Sigmoid colon (tissue), 7 donors: ENCODE measurements at regions of chr15 and their contacts with region 1.

Region 1: GRCh38 chr15:32659340-32660155 is 18.0 kb downstream of the SCG5 start:
- DNase-seq: no peak
- H3K4me3 ChIP-seq: no peak overlapping the region
- H3K27ac ChIP-seq: peak overlapping the region in 2 of 4 donors; percentile 2 to 48
- H3K4me1 ChIP-seq: peaks cover 0 to 9% (median 0%) of the 10 kb centered on the region in 4 donors
- H3K27me3 ChIP-seq: no peaks in the 10 kb centered on the region
- CTCF ChIP-seq: no peak
- EP300 ChIP-seq: no peak
- POLR2A ChIP-seq: no peak

Region 2: DNA sequence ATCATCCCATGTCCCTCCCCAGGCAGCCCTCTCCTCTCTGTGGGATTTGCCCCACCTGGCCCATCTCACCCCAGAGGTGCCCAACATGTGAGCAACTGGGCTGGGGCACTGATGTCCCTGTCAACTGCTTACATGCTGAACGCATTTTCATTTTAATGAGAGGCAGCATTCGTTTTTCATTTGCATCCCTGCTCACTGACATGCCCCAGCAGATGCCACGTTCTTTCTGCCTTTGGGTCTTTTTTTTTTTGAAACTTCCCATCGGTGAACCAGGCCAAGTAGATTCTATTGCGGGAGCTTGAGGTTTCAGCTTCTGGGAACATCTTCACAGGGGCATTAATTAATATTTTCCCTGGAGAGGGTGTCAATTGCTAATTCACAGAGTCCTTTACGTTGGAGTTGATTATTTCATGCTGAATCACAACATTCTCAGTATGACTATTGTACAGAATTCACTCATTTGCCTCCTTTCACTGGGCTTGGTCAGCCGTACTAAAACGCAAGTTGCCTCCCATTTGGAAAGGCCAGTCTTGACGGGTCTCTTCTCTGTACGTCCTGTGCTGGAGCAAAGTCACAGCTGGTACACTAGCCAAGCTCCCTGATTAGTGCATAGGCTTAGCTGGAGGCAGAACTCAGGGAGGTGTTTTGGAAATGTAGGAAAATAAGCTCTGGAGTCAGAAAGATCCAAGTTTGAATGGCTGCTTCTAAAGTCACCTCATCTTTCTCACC is 559.4 kb before region 1 on chr15:
- intact Hi-C with region 1: no loop called
- DNase-seq: no peak
- H3K4me3 ChIP-seq: no peak overlapping the region
- H3K27ac ChIP-seq: no peak overlapping the region
- H3K4me1 ChIP-seq: no peaks in the 10 kb centered on the region
- H3K27me3 ChIP-seq: no peaks in the 10 kb centered on the region
- CTCF ChIP-seq: no peak
- EP300 ChIP-seq: no peak
- POLR2A ChIP-seq: no peak

Region 3: DNA sequence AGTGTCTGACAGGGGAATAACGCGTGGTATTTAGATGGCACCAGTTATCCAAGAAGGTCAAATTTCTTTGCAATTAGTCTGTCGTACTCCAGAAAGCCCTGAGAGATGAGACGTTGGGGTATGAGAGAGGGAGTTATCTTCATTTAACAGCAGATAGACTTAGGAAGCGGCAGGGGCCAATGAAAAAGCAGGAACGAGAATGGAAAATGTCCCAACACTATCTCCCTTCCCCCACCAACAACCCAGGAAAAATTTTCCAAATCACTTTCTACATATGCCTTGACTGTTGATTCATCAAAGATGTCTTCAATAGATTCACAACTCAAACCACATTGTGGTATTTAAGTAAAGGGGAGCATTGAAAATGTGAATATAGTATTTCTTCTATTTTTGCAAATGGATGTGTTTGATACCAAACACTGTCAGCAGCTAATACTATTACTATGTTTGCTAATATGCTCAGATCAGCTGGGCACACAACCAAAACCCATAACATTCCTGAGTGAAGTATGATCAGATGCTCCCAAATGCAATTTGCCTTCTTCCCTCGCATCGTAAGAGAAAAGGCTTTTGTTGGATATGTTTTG is 44.9 kb after region 1 on chr15:
- intact Hi-C with region 1: no loop called
- DNase-seq: no peak
- H3K4me3 ChIP-seq: no peak overlapping the region
- H3K27ac ChIP-seq: no peak overlapping the region
- H3K4me1 ChIP-seq: peaks cover 0 to 11% (median 2%) of the 10 kb centered on the region in 4 donors
- H3K27me3 ChIP-seq: no peaks in the 10 kb centered on the region
- CTCF ChIP-seq: no peak
- EP300 ChIP-seq: no peak
- POLR2A ChIP-seq: no peak

Region 4: DNA sequence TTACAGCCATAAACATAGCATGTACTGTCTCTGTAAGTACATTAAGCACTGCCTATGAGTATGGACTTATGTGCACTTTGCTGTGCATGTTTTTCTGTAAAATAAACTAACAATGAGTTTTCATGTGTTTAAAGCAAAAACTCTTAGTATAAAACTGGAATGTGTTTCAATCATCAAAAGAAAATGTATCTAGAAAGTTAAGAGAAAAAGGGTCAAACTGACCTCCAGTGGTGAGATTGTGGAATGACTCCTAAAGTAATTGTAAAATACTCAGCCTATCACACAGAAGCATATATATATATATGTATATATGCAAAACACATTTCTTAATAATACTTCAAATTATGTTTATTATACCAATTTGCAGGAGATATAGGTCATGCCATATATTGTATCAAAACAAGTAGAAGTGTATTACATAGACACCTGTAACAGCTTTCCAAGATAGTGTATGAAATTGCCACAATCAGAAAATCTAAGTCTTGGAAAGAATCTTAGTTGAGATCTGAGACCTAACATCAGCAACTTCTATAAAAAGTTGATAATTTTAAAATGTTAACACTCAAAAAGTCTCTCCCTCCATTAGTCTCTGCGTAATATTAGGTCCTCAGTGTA is 335.4 kb after region 1 on chr15:
- intact Hi-C with region 1: loop called (anchors 2 kb)
- DNase-seq: no peak
- H3K4me3 ChIP-seq: no peak overlapping the region
- H3K27ac ChIP-seq: no peak overlapping the region
- H3K4me1 ChIP-seq: peaks cover 0 to 12% (median 3%) of the 10 kb centered on the region in 4 donors
- H3K27me3 ChIP-seq: no peaks in the 10 kb centered on the region
- CTCF ChIP-seq: peak in 3 of 4 experiments; percentile 40 to 62 (median 56)
- EP300 ChIP-seq: no peak
- POLR2A ChIP-seq: no peak

Region 5: GRCh38 chr15:33132722-33133345 is 473.3 kb after region 1 on chr15:
- intact Hi-C with region 1: loop called (anchors 5 kb)
- DNase-seq: no peak
- H3K4me3 ChIP-seq: no peak overlapping the region
- H3K27ac ChIP-seq: no peak overlapping the region
- H3K4me1 ChIP-seq: peaks cover 0 to 13% (median 5%) of the 10 kb centered on the region in 4 donors
- H3K27me3 ChIP-seq: no peaks in the 10 kb centered on the region
- CTCF ChIP-seq: peak in 2 of 4 experiments; percentile 38
- EP300 ChIP-seq: no peak
- POLR2A ChIP-seq: no peak